ENCODE measurements at regions of chr5 and their contacts with region 1.

Region 1: DNA sequence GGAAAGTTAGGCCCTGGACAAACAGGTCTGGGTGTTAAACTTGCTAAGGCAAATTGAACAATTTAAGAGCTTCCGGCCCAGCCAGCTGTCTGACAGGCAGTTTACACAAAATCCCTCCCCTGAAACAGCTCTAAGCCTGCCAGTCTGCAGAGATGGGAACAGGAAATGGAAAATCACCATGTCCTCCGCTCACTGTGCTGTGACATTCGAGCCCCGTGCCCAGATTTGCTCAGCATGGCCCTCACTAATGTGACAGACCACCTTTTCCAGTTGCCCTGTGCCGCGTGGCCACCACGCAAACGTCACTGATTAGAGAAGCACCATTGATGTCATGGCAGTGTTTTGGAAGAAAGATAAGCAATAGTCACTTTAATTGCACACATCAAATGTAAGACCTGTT is 41.0 kb downstream of the CCNJL start:
- DNase-seq: peak; percentile 54
- H3K4me3 ChIP-seq: no peak overlapping the region
- H3K27ac ChIP-seq: peak overlapping the region in 1 of 2 experiments; percentile 67; a peak in 2 of 4 replicates
- H3K4me1 ChIP-seq: peaks cover 11 to 33% of the 10 kb centered on the region in 2 experiments; a peak in 3 of 4 replicates
- H3K27me3 ChIP-seq: no peaks in the 10 kb centered on the region
- CTCF ChIP-seq: no peak
- EP300 ChIP-seq: no peak
- RAD21 ChIP-seq: no peak

Region 2: DNA sequence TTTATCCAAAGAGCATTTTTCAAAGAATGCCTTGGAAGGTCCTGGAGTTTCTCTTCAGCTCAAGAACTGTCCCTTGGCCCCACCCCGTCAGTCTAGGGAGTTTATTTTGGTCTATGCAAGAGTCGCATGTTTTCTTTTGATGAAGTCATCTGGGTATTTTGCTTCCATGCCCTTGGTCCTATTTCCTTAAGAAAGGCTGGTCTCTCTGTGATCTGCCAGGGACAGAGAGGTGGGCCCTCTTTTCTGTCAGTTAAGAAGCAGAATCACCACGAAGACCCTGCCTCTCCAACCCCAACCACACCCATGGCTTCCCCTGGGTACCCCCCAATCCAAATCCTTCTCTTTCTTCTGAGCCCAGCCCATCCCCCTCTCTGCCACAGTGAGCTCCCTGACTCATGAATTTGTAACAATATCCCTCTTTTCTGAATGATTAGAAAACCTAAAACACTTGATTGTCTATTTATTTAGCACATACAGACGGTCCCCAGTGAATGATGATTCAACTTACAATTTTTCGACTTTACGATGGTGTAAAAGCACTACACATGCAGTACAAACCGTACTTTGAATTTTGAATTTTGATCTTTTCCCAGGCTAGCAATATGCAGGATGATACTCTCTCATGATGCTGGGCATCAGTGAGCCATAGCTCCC is 518.6 kb before region 1 on chr5:
- CTCF ChIA-PET with region 1: no interaction called
- POLR2A ChIA-PET with region 1: no interaction called
- DNase-seq: no peak
- H3K4me3 ChIP-seq: no peak overlapping the region
- H3K27ac ChIP-seq: peak overlapping the region in 1 of 2 experiments; percentile 57; a peak in 2 of 4 replicates
- H3K4me1 ChIP-seq: peaks cover 0 to 21% of the 10 kb centered on the region in 2 experiments; a peak in 1 of 4 replicates
- H3K27me3 ChIP-seq: no peaks in the 10 kb centered on the region
- CTCF ChIP-seq: no peak
- EP300 ChIP-seq: no peak
- RAD21 ChIP-seq: no peak

Region 3: DNA sequence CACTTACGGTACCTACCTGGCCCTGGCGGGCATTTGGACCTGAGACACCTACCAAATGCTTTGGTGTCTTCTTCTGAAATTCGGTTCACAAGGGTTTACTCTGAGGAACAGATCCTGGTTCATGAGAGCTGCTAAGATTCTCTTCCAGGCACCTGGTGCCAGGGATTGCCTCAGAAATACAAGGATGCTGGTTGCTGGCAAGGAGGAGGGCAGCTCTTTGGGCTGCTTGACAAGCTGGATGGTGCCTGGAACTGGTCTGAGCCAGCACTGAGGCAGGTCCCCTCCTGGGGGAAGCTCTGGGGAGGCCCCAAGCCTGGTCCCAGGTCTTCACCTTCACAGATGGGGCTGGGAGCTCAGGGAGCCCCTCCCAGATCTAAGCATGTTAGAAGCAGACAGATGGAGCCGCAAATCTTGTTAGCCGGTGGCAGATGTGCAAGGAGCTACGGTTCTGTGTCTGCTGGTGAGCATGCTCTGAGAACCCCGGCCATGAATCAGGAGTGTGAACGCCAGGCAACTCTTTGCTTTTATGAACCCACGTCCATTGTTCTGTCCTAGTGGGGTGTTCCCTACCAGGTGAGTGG is 25.8 kb before region 1 on chr5:
- CTCF ChIA-PET with region 1: interaction called, 10 read pairs
- POLR2A ChIA-PET with region 1: interaction called, 3 read pairs
- DNase-seq: peak; percentile 62
- H3K4me3 ChIP-seq: no peak overlapping the region
- H3K27ac ChIP-seq: peak overlapping the region in 1 of 2 experiments; percentile 73; a peak in 2 of 4 replicates
- H3K4me1 ChIP-seq: peaks cover 0 to 19% of the 10 kb centered on the region in 2 experiments; a peak in 1 of 4 replicates
- H3K27me3 ChIP-seq: no peaks in the 10 kb centered on the region
- CTCF ChIP-seq: no peak
- EP300 ChIP-seq: no peak
- RAD21 ChIP-seq: 0 out of 2 replicates have a peak, but pooled peaks have one; percentile 6